CD8-positive, alpha-beta memory T cell (primary cell): ENCODE measurements at regions of chr12 and their contacts with region 1.

Region 1: DNA sequence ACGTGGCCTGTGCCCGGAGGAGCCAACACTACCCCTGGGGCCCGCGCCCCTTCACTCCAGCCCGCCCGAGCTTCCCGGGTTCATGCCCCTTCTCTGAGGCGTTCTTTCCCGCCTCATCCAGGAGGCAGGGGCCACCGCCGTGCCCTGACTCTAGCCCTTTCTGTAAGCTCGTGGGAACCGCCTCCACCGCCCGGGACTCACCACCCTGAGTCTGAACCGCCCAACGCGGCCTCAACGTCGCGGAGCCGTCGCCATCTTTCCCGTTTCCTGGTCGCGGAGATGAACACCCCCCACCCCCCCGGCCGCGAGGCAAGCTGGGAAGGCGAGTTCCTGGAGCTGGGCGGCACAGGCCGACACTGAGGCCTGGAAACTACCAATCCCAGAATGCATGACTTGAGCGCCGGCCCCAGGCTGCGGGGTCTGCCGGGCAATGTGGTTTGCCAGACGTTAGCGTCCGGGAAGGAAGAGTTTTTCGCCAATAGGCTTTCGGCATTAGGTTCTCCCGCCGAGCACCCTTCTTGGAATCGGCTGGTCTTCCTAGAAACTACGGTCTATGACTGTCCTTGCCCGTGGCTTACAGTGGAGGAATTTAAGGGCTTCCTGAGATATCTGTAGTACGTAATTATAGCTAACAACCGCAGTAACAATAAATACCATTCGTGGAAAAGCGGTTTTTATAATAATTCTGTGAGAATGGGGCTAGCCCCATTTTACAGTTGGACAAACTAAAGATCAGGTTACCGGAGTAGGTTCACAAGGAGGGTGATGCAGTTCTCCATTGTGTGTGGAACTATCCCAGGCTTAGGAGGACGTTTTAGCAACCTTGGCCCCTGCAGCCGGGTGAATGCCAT is at the start of gene DDX23:
- DNase-seq: peak; percentile 87 to 94 (median 89)
- H3K4me3 ChIP-seq: peak within 1 kb of the TSS; percentile 87
- H3K4me3 Mint-ChIP-seq: peak within 1 kb of the TSS; percentile 89 to 99 (median 97)
- H3K27ac ChIP-seq: peak within 1 kb of the TSS; percentile 98
- H3K27ac Mint-ChIP-seq: peak within 1 kb of the TSS; percentile 91 to 99 (median 96)
- H3K4me1 ChIP-seq: peaks cover 27% of the 10 kb centered on the region
- H3K4me1 Mint-ChIP-seq: peaks cover 34 to 46% (median 45%) of the 10 kb centered on the region in 3 donors
- H3K27me3 ChIP-seq: no peaks in the 10 kb centered on the region
- H3K27me3 Mint-ChIP-seq: peaks cover 0 to 4% of the 10 kb centered on the region in 2 donors
- total RNA-seq, gene DDX23: 147 to 148 TPM

Region 2: GRCh38 chr12:48340943-48341342 is 511.2 kb before region 1 on chr12:
- CTCF ChIA-PET with region 1: no interaction called
- POLR2A ChIA-PET with region 1: no interaction called
- DNase-seq: no peak
- H3K4me3 ChIP-seq: no peak overlapping the region
- H3K4me3 Mint-ChIP-seq: no peak overlapping the region
- H3K27ac ChIP-seq: no peak overlapping the region
- H3K27ac Mint-ChIP-seq: peak overlapping the region in 2 of 8 donors; percentile 39 to 61
- H3K4me1 ChIP-seq: no peaks in the 10 kb centered on the region
- H3K4me1 Mint-ChIP-seq: peaks cover 20 to 25% (median 25%) of the 10 kb centered on the region in 3 donors
- H3K27me3 ChIP-seq: no peaks in the 10 kb centered on the region
- H3K27me3 Mint-ChIP-seq: no peaks in the 10 kb centered on the region

Region 3: DNA sequence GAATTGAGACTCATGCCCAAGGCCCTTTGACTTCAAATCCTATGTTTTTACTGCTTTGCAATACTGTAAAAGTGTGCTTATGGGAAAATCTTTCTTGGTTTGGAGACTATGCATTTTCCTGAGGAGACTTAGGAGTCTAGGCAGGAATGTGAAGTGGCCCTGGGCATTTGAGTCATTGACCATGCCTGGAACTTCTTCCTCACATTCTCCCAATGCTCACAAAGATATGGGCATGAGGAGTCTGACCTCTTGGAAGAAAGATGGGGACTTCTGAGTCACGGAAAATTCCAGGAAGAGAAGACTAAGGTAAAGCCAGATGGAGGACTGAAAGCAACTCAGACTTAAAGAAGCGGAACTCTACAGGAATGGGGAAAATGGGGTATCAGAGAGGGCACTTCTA is 463.2 kb before region 1 on chr12:
- CTCF ChIA-PET with region 1: no interaction called
- POLR2A ChIA-PET with region 1: no interaction called
- DNase-seq: no peak
- H3K4me3 ChIP-seq: no peak overlapping the region
- H3K4me3 Mint-ChIP-seq: no peak overlapping the region
- H3K27ac ChIP-seq: no peak overlapping the region
- H3K27ac Mint-ChIP-seq: no peak overlapping the region
- H3K4me1 ChIP-seq: no peaks in the 10 kb centered on the region
- H3K4me1 Mint-ChIP-seq: no peaks in the 10 kb centered on the region
- H3K27me3 ChIP-seq: no peaks in the 10 kb centered on the region
- H3K27me3 Mint-ChIP-seq: peaks cover 27 to 58% of the 10 kb centered on the region in 2 donors

Region 4: GRCh38 chr12:48865434-48866290 is 13.6 kb after region 1 on chr12 and contains the start of gene RND1:
- CTCF ChIA-PET with region 1: interaction called, 49 read pairs
- POLR2A ChIA-PET with region 1: interaction called, 20 read pairs
- DNase-seq: peak; percentile 75 to 90 (median 86)
- H3K4me3 ChIP-seq: peak within 1 kb of the TSS; percentile 84
- H3K4me3 Mint-ChIP-seq: peak within 1 kb of the TSS; percentile 90 to 96 (median 93)
- H3K27ac ChIP-seq: peak within 1 kb of the TSS; percentile 39
- H3K27ac Mint-ChIP-seq: peak within 1 kb of the TSS; percentile 55 to 96 (median 88)
- H3K4me1 ChIP-seq: peaks cover 22% of the 10 kb centered on the region
- H3K4me1 Mint-ChIP-seq: peaks cover 21 to 27% (median 24%) of the 10 kb centered on the region in 3 donors
- H3K27me3 ChIP-seq: peaks cover 22% of the 10 kb centered on the region
- H3K27me3 Mint-ChIP-seq: peaks cover 26 to 30% of the 10 kb centered on the region in 2 donors
- total RNA-seq, gene RND1: 2.0 to 2.6 TPM

Region 5: GRCh38 chr12:48903982-48904411 is 51.9 kb after region 1 on chr12:
- CTCF ChIA-PET with region 1: interaction called, 15 read pairs
- POLR2A ChIA-PET with region 1: interaction called, 3 read pairs
- DNase-seq: peak; percentile 70 to 89 (median 78)
- H3K4me3 ChIP-seq: peak overlapping the region; percentile 49
- H3K4me3 Mint-ChIP-seq: peak overlapping the region; percentile 28 to 83 (median 80)
- H3K27ac ChIP-seq: no peak overlapping the region
- H3K27ac Mint-ChIP-seq: peak overlapping the region; percentile 41 to 91 (median 82)
- H3K4me1 ChIP-seq: peaks cover 6% of the 10 kb centered on the region
- H3K4me1 Mint-ChIP-seq: peaks cover 3 to 14% (median 4%) of the 10 kb centered on the region in 3 donors
- H3K27me3 ChIP-seq: no peaks in the 10 kb centered on the region
- H3K27me3 Mint-ChIP-seq: no peaks in the 10 kb centered on the region

Region 6: DNA sequence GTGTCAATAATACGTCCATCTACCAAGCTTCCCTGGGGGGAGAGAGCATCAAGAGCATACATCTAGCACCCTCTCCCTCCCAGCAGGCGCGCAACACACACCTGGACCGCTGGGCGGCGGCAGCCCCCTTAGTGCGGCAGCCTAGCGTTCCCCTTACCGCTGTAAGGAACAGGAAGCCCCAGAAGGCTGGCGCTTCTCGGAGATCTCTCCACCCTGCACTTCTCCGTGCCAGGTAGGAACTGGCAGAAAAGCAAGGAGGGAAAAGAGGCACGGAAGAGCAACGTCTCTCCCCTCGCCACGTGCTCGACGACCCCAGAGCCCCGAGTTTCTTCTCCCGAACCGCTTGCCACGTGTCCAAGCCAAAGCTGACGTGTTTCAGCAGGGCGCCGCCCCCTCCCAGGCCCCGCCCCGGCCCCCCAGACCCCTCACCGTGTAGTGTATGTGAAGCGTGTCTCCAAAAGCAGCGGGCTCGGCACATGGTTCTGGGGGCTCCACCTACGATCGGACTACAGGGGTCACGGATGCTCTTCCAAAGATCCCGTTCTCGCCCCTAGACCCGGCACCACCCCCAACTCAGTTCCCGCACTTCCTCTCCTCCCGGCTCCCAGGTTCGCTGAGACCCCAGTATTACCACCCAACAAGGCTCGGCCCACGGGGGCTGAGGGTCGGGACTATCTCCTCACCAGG is 72.7 kb after region 1 on chr12:
- CTCF ChIA-PET with region 1: interaction called, 35 read pairs
- POLR2A ChIA-PET with region 1: interaction called, 19 read pairs
- DNase-seq: peak; percentile 63 to 86 (median 81)
- H3K4me3 ChIP-seq: peak overlapping the region; percentile 96
- H3K4me3 Mint-ChIP-seq: peak overlapping the region; percentile 88 to 98 (median 96)
- H3K27ac ChIP-seq: peak overlapping the region; percentile 90
- H3K27ac Mint-ChIP-seq: peak overlapping the region; percentile 91 to 100 (median 98)
- H3K4me1 ChIP-seq: peaks cover 12% of the 10 kb centered on the region
- H3K4me1 Mint-ChIP-seq: peaks cover 53 to 64% (median 62%) of the 10 kb centered on the region in 3 donors
- H3K27me3 ChIP-seq: no peaks in the 10 kb centered on the region
- H3K27me3 Mint-ChIP-seq: no peaks in the 10 kb centered on the region

Region 7: DNA sequence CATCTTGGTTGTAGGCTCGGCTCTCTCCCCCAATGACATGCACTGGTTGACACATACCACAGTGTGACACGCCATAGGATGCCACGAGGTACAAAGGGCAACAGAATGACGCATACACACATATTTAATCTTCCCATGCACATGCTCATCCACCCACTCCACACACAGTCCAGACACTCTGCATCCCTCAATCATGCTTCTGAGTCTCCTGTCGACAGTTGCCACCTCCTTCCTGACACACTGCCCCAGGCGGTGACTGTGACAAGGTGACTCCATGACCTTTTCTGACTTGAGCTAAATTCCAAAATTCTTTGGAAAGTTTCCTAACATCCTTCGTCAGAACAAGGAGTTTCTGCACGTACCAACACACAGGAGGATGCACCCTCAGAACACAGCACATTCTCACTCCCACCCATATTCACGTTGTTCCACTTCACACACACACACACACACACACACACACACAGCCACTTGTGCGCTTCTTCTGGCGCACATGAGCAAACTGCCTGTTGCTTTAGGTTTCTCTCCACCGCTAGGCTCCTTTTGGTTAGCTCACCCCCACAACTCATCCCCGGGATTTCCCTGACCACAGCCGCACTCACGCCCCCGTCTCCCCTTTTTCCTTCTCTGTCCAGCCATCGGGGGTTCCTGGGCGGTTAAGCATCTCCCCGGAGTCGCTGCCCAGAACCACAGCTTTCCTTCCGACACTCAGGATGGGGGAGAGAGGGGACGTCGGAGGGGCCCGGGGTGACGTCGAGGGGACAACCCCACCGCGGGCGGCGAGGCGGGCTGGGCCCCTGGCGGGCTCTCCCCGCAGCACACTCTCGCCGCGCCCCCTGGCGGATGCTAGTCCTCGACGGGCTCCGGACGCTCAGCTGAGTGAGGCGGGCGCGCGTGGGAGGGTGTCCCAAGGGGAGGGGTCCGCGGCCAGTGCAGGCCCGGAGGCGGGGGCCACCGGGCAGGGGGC is 125.5 kb after region 1 on chr12:
- CTCF ChIA-PET with region 1: interaction called, 46 read pairs
- POLR2A ChIA-PET with region 1: interaction called, 14 read pairs
- DNase-seq: peak; percentile 77 to 87 (median 80)
- H3K4me3 ChIP-seq: peak overlapping the region; percentile 89
- H3K4me3 Mint-ChIP-seq: peak overlapping the region; percentile 63 to 73 (median 71)
- H3K27ac ChIP-seq: no peak overlapping the region
- H3K27ac Mint-ChIP-seq: peak overlapping the region in 7 of 8 donors; percentile 36 to 93 (median 87)
- H3K4me1 ChIP-seq: peaks cover 49% of the 10 kb centered on the region
- H3K4me1 Mint-ChIP-seq: peaks cover 43 to 58% (median 51%) of the 10 kb centered on the region in 3 donors
- H3K27me3 ChIP-seq: peaks cover 25% of the 10 kb centered on the region
- H3K27me3 Mint-ChIP-seq: peaks cover 12 to 22% of the 10 kb centered on the region in 2 donors

Region 8: GRCh38 chr12:49200919-49201594 is 348.9 kb after region 1 on chr12:
- CTCF ChIA-PET with region 1: no interaction called
- POLR2A ChIA-PET with region 1: no interaction called
- DNase-seq: peak in 2 of 5 donors; percentile 59 to 64
- H3K4me3 ChIP-seq: no peak overlapping the region
- H3K4me3 Mint-ChIP-seq: no peak overlapping the region
- H3K27ac ChIP-seq: no peak overlapping the region
- H3K27ac Mint-ChIP-seq: peak overlapping the region in 7 of 8 donors; percentile 1 to 59 (median 10)
- H3K4me1 ChIP-seq: peaks cover 9% of the 10 kb centered on the region
- H3K4me1 Mint-ChIP-seq: peaks cover 8 to 16% (median 16%) of the 10 kb centered on the region in 3 donors
- H3K27me3 ChIP-seq: no peaks in the 10 kb centered on the region
- H3K27me3 Mint-ChIP-seq: peaks cover under 1 to 7% of the 10 kb centered on the region in 2 donors